Mammary epithelial cell (primary cell): ENCODE measurements at regions of chr4 and their contacts with region 1.

Region 1: DNA sequence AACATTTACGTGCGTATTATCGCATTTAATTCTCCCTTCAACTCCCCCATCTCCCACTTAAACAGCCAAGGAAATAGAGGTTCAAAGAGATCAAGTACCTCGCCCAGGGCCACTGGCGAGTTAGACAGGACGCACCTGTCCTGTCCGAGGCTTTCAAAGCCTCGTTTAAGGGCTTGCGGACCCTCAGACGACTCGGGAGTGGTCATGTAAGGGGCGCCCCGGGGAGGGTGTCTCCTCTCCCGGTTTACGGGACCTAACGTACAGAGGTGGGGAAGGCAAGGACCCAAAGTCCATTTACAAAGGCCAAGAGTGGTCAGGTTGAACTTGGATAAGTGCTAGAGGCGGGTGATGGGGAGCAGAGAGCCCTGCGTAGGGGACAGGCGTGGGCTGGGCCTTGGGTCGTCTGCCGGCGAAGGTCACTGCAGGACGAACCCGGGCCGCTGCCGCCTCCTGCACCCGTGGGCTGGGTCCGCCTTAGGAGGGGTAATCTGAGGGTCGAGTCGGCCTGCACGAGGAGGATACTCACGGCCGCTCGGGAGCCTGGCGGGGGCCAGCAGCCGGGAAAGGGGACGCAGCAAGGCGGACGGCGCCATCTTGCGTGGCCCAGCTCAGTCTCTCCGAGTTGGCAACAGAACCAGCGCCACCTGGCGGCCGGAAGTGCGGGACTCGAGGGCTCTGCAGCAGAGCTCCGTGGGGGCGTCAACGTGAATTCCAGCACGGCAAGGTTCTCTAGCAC is 5.9 kb upstream of the NAA15 start:
- DNase-seq: peak; percentile 84
- H3K4me3 ChIP-seq: peak overlapping the region; percentile 75 to 84 (median 79)
- H3K27ac ChIP-seq: peak overlapping the region; percentile 85
- H3K4me1 ChIP-seq: peaks cover 26% of the 10 kb centered on the region
- H3K27me3 ChIP-seq: no peaks in the 10 kb centered on the region
- CTCF ChIP-seq: peak; percentile 83 to 98

Region 2: DNA sequence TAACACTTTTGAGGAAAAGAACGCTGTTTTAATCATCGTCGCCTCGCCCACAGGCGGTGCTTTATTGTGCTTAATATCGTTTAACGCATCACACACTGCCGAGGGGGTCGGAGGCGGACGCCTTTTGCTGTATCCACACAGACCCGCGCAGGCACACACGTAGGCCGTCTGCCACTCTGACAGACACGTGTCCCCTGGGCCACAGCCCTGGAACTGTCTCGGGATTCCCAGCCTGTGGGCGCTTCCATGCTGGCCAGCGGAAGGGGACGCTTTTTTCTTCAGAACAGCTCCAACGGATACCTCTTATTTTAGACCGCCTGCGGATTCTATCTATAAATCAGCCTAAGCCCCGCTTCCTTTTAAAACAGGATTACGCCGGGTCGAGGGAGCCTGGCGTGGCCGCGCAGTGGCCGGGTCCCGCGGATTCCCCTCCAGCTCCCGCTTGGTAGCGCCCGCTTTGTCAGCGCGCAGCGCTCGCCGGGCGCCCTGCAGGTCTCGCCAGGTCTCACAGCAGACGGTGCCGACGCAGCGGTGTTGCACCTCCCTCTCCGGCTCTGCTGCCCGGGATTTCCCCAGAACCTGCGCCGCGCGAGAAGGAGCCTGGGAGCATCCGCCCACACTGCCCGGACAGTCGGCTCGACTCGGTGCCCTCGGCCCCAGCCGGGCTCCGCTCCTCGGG is 280.0 kb before region 1 on chr4 and contains the start of gene NOCT:
- CTCF ChIA-PET with region 1: no interaction called
- dilution Hi-C with region 1: no loop called
- in situ Hi-C with region 1: no loop called
- intact Hi-C with region 1: loop called (anchors 5 kb)
- DNase-seq: peak; percentile 93
- H3K4me3 ChIP-seq: peak within 1 kb of the TSS; percentile 53 to 100 (median 91)
- H3K27ac ChIP-seq: peak within 1 kb of the TSS; percentile 97
- H3K4me1 ChIP-seq: peaks cover 39% of the 10 kb centered on the region
- H3K27me3 ChIP-seq: no peaks in the 10 kb centered on the region
- CTCF ChIP-seq: no peak
- total RNA-seq, gene NOCT: 20.6 to 34.8 TPM

Region 3: DNA sequence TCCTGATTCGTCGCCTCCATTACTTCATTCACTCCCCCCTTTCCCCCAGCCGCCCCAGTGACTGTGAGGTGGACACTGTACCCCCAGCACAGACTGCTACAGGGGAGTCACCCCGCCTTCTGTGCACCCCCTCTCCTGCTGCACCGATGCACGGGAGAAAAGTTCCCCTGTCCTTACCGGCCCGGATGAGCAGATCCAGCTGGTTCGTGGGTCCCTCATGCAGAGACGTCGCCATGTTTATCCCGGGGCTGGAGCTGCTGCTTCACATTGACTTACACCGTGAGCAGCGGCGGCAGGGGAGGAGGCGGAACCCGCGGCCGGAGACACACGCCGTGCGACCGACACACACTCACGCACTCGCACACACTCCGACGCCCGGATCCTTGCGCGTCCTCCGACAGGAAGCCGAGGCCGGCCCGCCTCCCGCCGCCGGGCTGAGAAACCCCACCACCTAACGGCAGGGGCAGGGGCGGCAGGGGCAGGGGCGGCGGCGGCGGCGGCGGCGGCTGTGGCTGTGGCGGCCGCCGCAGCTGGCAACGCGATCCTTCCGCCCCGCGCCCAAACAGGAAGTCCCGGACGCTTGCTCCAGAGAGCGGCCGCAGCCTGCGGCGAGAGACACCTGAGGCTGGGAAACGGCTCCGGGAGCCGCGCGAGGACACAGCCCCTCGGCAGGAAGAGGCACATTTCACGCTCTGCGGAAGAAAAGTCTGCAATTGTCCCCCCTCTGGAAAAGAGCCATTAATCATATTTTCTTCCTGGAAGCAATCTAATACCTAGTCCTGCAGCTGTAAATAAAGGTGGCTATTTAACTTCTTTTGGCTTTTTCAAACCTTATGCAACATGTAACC is 211.2 kb before region 1 on chr4:
- CTCF ChIA-PET with region 1: no interaction called
- dilution Hi-C with region 1: no loop called
- in situ Hi-C with region 1: loop called in 1 of 2 experiments (anchors 10 kb)
- intact Hi-C with region 1: loop called (anchors 2 kb)
- DNase-seq: peak; percentile 85
- H3K4me3 ChIP-seq: peak overlapping the region; percentile 74 to 80 (median 79)
- H3K27ac ChIP-seq: peak overlapping the region; percentile 85
- H3K4me1 ChIP-seq: no peaks in the 10 kb centered on the region
- H3K27me3 ChIP-seq: no peaks in the 10 kb centered on the region
- CTCF ChIP-seq: peak in 1 of 2 donors; percentile 17

Region 4: DNA sequence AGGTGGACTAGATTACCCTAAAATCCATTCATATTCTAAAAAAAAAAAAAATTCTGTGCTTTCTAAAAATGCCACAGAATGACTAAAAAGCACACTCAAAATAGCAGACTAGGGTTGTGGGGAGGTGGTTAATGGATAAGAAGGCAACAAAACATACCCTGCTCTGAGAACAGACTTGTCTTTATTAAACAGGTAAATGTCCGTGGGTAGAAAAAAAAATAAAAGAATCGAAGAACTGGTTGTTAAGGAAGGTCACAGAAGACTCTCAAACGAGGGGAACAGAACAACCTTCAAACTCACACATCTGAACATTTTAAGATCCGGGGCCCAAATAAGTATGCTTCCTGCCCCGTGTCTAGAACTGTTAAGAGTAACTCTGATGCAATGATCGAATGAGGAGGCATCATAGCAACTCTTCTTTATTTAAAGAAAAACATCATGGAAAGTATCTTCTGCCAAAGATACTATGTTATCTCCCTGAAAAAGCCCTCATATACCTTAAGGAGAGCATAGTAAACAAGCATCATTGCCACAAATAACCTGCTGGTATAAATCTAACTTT is 186.7 kb before region 1 on chr4:
- CTCF ChIA-PET with region 1: no interaction called
- dilution Hi-C with region 1: loop called (anchors 10 kb)
- in situ Hi-C with region 1: no loop called
- intact Hi-C with region 1: no loop called
- DNase-seq: no peak
- H3K4me3 ChIP-seq: no peak overlapping the region
- H3K27ac ChIP-seq: no peak overlapping the region
- H3K4me1 ChIP-seq: no peaks in the 10 kb centered on the region
- H3K27me3 ChIP-seq: no peaks in the 10 kb centered on the region
- CTCF ChIP-seq: no peak

Region 5: DNA sequence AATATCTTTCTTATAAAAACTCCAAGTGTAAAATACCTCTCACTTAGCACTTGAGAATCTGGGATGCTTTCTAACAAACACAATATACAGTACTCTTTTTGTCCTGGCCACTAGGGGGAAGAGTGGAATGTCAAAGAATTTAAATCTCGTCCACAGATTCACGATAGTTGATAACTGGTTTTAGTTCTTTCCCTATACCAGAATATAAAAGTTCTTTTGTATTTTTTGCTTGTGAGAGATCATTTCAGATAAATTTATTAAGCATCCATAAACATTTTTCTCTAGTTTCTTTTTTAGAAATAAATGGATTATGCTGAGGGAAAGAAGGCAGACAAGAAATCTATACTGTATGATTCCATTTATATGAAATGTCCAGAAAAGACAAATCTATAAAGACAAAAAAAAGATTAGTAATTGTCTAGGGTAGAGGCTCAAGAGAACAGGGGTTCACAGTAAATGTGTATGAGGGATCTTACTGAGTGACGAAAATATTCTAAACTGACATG is 65.8 kb before region 1 on chr4:
- CTCF ChIA-PET with region 1: no interaction called
- dilution Hi-C with region 1: loop called (anchors 5 kb)
- in situ Hi-C with region 1: loop called (anchors 5 kb)
- intact Hi-C with region 1: loop called (anchors 1 kb)
- DNase-seq: peak; percentile 47
- H3K4me3 ChIP-seq: no peak overlapping the region
- H3K27ac ChIP-seq: no peak overlapping the region
- H3K4me1 ChIP-seq: no peaks in the 10 kb centered on the region
- H3K27me3 ChIP-seq: no peaks in the 10 kb centered on the region
- CTCF ChIP-seq: peak; percentile 73 to 75

Region 6: DNA sequence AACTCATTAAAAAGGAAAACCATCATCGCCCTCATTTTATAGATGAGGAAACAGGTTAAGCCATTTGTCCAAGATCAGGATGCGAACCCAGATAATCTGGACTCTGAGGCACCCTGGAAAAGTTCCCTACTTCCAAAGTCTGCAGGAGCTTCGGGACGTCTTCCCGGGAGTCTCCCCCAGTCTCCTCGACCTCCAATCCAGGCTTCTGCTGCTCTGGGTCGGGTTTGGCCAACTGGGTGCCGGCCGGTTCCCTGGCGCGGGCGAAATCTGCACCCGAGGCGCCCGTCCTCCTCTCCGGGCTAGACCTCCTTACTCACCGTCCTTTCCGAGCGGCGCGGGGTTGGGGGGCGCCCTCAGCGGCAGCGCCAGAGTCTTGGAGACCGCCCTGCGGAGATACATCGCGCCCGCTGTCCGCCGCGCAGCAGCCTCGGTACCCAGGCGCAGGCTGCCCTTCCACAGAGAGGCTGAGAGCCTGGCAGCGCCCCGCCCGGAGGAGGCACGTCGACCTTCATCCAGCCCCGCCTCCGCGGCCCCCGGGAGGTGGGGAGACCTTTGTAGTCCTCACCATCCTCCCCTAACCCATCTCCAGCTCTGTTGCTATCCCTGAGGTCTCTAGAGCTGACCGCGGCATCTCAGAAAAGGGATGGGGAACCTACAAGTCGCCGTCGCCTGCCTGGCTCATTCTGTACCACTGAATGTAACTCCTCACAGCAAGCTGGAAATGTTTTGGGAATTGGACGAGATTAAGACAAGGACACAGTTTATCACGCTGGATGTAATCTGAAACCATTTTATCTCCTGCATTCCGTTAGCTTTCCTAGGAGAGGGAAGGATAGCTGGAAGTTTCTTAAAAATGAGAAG is 15.4 kb before region 1 on chr4 and contains the start of gene MGARP:
- CTCF ChIA-PET with region 1: no interaction called
- dilution Hi-C with region 1: no loop called
- in situ Hi-C with region 1: no loop called
- intact Hi-C with region 1: loop called (anchors 2 kb)
- DNase-seq: peak; percentile 33
- H3K4me3 ChIP-seq: peak within 1 kb of the TSS; percentile 46 to 63 (median 48)
- H3K27ac ChIP-seq: no peak within 1 kb of the TSS
- H3K4me1 ChIP-seq: peaks cover 3% of the 10 kb centered on the region
- H3K27me3 ChIP-seq: no peaks in the 10 kb centered on the region
- CTCF ChIP-seq: no peak
- total RNA-seq, gene MGARP: 4.7 to 5.5 TPM

Region 7: DNA sequence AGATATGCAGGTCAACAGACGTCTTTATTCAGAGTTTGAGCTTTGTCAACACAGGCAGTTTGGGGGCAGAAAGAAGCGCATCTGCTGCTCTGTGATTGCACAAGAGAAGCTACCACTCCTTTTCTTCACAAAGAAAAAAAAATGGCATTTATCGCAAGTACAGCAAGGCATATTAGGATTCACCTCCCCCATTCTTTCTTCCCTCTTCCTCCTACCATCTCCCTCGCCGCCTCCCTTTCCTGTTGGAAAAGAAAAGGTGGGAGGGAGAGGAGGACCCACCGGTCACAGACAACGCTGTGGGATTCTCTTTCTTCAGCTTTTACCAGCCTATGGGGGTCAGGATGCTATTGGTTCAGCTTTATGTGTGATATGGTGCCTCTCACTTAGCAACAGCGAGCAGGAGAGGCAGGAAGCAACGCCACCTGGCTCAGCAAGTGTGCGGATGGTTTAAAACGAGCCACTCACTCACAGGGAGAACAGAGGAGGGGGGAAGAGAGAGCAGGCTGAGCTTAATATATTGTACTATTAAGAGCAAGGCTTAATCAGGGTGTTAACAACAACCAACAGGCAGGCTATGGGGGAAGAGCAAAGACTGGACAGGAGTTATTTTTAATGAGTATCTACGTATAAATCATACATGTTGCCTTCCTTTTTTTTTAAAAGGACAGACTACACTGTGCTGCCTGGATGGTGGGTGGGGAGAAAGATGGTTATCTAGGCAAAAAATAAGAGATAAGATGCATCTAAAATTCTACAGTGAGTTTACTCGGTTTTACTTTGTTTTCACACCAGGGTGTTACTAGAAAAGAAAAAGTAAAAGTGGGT is 753.9 kb after region 1 on chr4:
- CTCF ChIA-PET with region 1: no interaction called
- dilution Hi-C with region 1: no loop called
- in situ Hi-C with region 1: no loop called
- intact Hi-C with region 1: no loop called
- DNase-seq: peak; percentile 50
- H3K4me3 ChIP-seq: peak overlapping the region; percentile 25 to 33 (median 30)
- H3K27ac ChIP-seq: no peak overlapping the region
- H3K4me1 ChIP-seq: peaks cover 7% of the 10 kb centered on the region
- H3K27me3 ChIP-seq: no peaks in the 10 kb centered on the region
- CTCF ChIP-seq: peak in 1 of 2 donors; percentile 35